Breast epithelium (tissue), 4 donors: ENCODE measurements at regions of chr3 and their contacts with region 1.

Region 1: DNA sequence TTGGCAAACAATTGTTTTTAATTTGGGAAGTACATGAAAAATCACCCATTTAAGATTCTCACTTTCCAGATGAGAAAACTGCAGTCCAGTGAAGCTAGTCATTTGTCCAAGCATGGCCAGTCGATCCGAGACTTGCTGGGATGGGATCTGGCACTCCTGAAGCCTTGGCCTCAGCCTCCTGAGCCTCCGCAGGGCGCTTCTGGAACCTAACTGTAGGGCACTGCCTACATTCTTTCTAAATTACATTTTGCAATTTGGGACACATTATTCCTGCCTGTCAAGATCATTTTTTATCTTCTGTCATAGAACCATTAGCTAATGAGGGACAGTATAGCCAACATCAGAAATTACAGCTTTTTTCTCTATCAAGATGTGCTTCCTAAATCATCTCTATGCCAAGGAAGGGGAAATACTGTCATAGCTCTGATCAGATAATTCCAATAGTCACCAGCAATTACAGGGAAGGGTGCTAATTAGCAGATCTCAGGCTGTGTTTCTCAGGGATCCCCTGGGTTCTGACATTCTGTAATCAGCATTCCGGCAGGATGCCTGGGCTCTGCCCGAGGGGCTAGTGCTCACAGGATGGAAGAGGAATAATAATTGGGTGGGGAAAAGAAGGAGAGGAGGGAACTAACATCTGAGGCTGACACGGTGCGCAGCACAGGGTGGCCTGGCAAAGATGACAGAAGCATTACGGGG is 28.3 kb downstream of the ANAPC13 start:
- DNase-seq: no peak
- H3K4me3 ChIP-seq: no peak overlapping the region
- H3K27ac ChIP-seq: no peak overlapping the region
- H3K4me1 ChIP-seq: peaks cover 0 to 4% of the 10 kb centered on the region in 2 donors
- H3K27me3 ChIP-seq: no peaks in the 10 kb centered on the region
- CTCF ChIP-seq: no peak
- POLR2A ChIP-seq: no peak

Region 2: GRCh38 chr3:134473868-134474546 is 16.5 kb after region 1 on chr3:
- intact Hi-C with region 1: loop called (anchors 1 kb)
- DNase-seq: peak; percentile 76 to 82
- H3K4me3 ChIP-seq: no peak overlapping the region
- H3K27ac ChIP-seq: peak overlapping the region in 1 of 2 donors; percentile 35
- H3K4me1 ChIP-seq: no peaks in the 10 kb centered on the region
- H3K27me3 ChIP-seq: no peaks in the 10 kb centered on the region
- CTCF ChIP-seq: peak; percentile 90 to 93 (median 91)
- POLR2A ChIP-seq: no peak